Endothelial cell of umbilical vein (primary cell): ENCODE measurements at regions of chr12 and their contacts with region 1.

Region 1: DNA sequence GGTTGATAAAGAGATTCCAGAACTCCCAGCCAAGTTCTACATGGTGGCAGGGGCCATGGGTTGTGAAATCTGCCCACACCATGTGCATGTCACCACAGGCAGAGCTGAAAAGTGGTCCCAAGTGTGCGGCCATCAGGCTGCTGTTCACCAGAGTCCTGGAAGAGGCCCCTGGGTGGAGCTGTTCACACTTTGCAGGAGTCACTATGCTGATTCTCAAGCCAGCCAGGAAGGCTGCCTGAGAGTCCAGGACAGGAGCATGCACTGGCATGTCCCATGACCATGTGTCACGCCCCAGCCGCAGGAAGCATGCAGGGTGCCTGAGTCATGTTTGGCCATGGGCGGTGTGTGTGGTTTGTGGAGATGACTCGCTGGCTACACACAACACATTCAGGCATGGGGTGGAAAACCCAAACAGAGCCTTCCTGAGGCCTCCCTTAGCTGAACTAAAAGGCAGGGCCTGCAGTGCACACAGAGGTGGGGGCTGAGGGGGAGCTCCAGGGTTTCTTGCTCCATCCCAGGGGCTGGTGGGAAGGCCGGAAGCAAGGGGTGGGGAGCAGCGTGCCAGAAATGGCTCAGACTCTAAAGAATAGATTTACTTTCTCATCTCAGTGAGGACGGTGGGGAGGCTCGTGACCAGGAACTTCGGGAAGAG is 19.4 kb downstream of the ABCB9 start:
- DNase-seq: peak; percentile 96
- H3K4me3 ChIP-seq: no peak overlapping the region
- H3K27ac ChIP-seq: peak overlapping the region; percentile 85
- H3K4me1 ChIP-seq: peaks cover 53% of the 10 kb centered on the region
- H3K27me3 ChIP-seq: no peaks in the 10 kb centered on the region
- CTCF ChIP-seq: peak; percentile 26 to 38
- POLR2A ChIP-seq: peak; percentile 41

Region 2: GRCh38 chr12:122871851-122872780 is 74.7 kb before region 1 on chr12:
- CTCF ChIA-PET with region 1: interaction called, 23 read pairs
- POLR2A ChIA-PET with region 1: no interaction called
- dilution Hi-C with region 1: no loop called
- intact Hi-C with region 1: loop called (anchors 1 kb)
- DNase-seq: peak; percentile 84
- H3K4me3 ChIP-seq: peak overlapping the region in 2 of 3 experiments; percentile 25 to 60
- H3K27ac ChIP-seq: peak overlapping the region; percentile 92
- H3K4me1 ChIP-seq: peaks cover 32% of the 10 kb centered on the region
- H3K27me3 ChIP-seq: no peaks in the 10 kb centered on the region
- CTCF ChIP-seq: no peak
- POLR2A ChIP-seq: no peak

Region 3: GRCh38 chr12:122895705-122896636 is 50.8 kb before region 1 on chr12 and contains the start of gene VPS37B:
- CTCF ChIA-PET with region 1: interaction called, 4 read pairs
- POLR2A ChIA-PET with region 1: interaction called, 3 read pairs
- dilution Hi-C with region 1: no loop called
- intact Hi-C with region 1: loop called (anchors 5 kb)
- DNase-seq: peak; percentile 82
- H3K4me3 ChIP-seq: peak within 1 kb of the TSS; percentile 73 to 90 (median 85)
- H3K27ac ChIP-seq: peak within 1 kb of the TSS; percentile 75
- H3K4me1 ChIP-seq: peaks cover 32% of the 10 kb centered on the region
- H3K27me3 ChIP-seq: no peaks in the 10 kb centered on the region
- CTCF ChIP-seq: no peak
- POLR2A ChIP-seq: peak; percentile 87
- total RNA-seq, gene VPS37B: 45.9 and 46.4 TPM in 2 replicates

Region 4: GRCh38 chr12:122958198-122958888 is 11.5 kb after region 1 on chr12:
- CTCF ChIA-PET with region 1: interaction called, 8 read pairs
- POLR2A ChIA-PET with region 1: interaction called, 6 read pairs
- dilution Hi-C with region 1: no loop called
- intact Hi-C with region 1: loop called (anchors 1 kb)
- DNase-seq: peak; percentile 98
- H3K4me3 ChIP-seq: no peak overlapping the region
- H3K27ac ChIP-seq: peak overlapping the region; percentile 80
- H3K4me1 ChIP-seq: peaks cover 12% of the 10 kb centered on the region
- H3K27me3 ChIP-seq: no peaks in the 10 kb centered on the region
- CTCF ChIP-seq: no peak
- POLR2A ChIP-seq: peak; percentile 38

Region 5: DNA sequence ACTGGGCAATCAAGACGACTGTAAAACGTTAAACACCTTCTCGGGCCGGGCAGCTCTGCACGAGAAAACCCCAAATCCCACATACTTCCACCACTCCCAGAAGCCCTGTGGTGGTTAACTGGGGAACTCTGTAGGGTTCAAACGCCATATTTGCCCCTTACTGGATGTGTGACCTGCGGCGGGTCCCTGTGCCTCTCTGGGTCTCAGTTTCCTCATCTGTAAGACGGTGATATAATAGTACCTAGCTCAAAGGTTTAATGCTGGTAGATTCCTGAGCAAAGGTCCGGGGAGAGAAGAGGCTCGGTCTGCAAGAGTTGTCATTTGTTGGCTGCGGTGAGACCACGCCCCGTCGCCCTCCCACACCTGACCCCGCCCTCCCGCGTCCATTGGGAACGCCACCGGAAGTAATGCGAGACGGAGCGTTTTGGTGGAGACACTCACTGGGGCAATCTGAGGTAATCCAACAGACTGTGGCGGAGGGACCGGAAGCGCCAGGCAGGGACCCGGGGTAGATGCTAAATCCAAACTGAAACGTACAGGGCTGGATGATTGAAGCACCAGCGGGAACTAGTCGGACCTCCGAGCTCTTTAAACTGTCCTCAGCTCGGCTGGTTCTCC is 27.6 kb after region 1 on chr12:
- CTCF ChIA-PET with region 1: interaction called, 7 read pairs
- POLR2A ChIA-PET with region 1: no interaction called
- dilution Hi-C with region 1: no loop called
- intact Hi-C with region 1: loop called (anchors 1 kb)
- DNase-seq: peak; percentile 99
- H3K4me3 ChIP-seq: peak overlapping the region; percentile 65 to 87 (median 84)
- H3K27ac ChIP-seq: peak overlapping the region; percentile 99
- H3K4me1 ChIP-seq: peaks cover 12% of the 10 kb centered on the region
- H3K27me3 ChIP-seq: no peaks in the 10 kb centered on the region
- CTCF ChIP-seq: no peak
- POLR2A ChIP-seq: no peak